ENCODE measurements at regions of chr12 and their contacts with region 1.

Region 1: GRCh38 chr12:132075714-132076553 is 68.2 kb downstream of the DDX51 start:
- DNase-seq: no peak
- ATAC-seq: no peak
- H3K4me3 ChIP-seq: no peak overlapping the region
- H3K27ac ChIP-seq: no peak overlapping the region
- H3K4me1 ChIP-seq: no peaks in the 10 kb centered on the region
- H3K27me3 ChIP-seq: no peaks in the 10 kb centered on the region
- CTCF ChIP-seq: peak; percentile 34; the same call in 1 of the 2 replicates

Region 2: GRCh38 chr12:131755305-131756113 is 320.4 kb before region 1 on chr12:
- CTCF ChIA-PET with region 1: no interaction called
- POLR2A ChIA-PET with region 1: no interaction called
- in situ Hi-C with region 1: no loop called
- intact Hi-C with region 1: no loop called
- DNase-seq: no peak
- ATAC-seq: peak; percentile 75
- H3K4me3 ChIP-seq: no peak overlapping the region
- H3K27ac ChIP-seq: no peak overlapping the region
- H3K4me1 ChIP-seq: no peaks in the 10 kb centered on the region; the same call in 1 of the 2 replicates
- H3K27me3 ChIP-seq: no peaks in the 10 kb centered on the region
- CTCF ChIP-seq: no peak; the same call in none of the 2 replicates

Region 3: DNA sequence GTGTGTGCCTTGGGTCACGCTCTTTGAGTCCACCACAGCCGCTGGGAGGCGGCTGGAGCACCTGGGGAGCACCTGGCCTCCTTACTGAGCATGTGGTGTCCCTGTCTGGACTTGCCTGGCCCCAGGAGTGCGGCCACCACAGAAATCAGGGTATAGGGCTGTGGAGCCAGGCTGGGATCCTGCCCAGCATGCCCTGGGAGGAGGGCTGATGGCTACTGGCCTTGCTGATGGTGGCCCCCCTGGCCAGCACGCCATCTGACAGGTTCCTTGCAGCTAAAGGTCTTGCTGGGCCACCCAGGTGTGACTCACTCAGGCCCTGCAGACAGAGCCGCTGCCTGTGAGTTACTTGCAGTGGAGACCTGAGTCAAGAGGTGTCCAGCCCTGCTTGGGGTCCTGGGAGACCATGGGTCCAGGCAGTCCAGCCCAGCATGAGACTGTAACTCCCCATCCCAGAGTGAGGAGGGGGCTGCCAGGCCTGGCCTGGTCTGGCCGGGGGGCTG is 175.5 kb before region 1 on chr12:
- CTCF ChIA-PET with region 1: no interaction called
- POLR2A ChIA-PET with region 1: interaction called, 13 read pairs
- in situ Hi-C with region 1: no loop called
- intact Hi-C with region 1: no loop called
- DNase-seq: no peak
- ATAC-seq: no peak
- H3K4me3 ChIP-seq: no peak overlapping the region
- H3K27ac ChIP-seq: no peak overlapping the region
- H3K4me1 ChIP-seq: no peaks in the 10 kb centered on the region; the same call in 1 of the 2 replicates
- H3K27me3 ChIP-seq: no peaks in the 10 kb centered on the region
- CTCF ChIP-seq: no peak

Region 4: DNA sequence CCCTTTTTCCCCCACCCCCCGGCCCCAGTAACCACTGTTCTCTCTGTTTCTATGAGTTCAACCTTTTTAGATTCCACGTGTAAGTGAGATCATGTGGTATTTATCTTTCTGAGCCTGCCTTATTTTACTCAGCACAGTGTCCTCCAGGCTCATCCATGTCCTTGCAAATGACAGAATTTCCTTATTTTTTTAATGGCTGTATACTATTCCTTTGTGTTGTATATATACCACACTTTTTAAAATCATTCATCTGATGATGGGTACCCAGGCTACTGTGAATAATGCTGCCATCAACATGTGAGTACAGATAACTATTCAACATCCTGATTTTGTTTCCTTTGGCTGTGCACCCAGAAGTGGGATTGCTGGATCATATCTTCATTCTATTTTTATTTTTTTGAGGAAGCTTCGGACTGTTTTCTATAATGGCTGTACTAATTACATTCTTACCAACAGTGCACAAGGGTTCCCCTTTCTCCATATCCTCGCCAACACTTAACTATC is 13.5 kb after region 1 on chr12:
- CTCF ChIA-PET with region 1: no interaction called
- POLR2A ChIA-PET with region 1: no interaction called
- in situ Hi-C with region 1: no loop called
- intact Hi-C with region 1: no loop called
- DNase-seq: no peak
- ATAC-seq: no peak
- H3K4me3 ChIP-seq: no peak overlapping the region
- H3K27ac ChIP-seq: no peak overlapping the region
- H3K4me1 ChIP-seq: peaks cover 9% of the 10 kb centered on the region
- H3K27me3 ChIP-seq: no peaks in the 10 kb centered on the region
- CTCF ChIP-seq: no peak

Region 5: DNA sequence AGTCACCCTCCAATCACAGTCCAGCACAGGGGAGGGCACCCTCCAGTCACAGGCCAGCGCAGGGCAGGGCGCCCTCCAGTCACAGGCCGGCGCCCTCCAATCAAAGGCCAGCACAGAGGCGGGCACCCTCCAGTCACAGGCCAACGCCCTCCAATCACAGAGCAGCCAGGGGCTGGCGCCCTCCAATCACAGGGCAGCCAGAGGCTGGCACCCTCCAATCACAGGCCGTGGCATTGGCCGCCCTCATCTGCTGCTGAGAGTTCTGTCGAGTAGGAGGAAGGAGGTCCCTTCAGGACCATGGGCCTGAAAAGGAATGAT is 41.6 kb after region 1 on chr12:
- CTCF ChIA-PET with region 1: interaction called, 11 read pairs
- POLR2A ChIA-PET with region 1: no interaction called
- in situ Hi-C with region 1: no loop called
- intact Hi-C with region 1: no loop called
- DNase-seq: no peak
- ATAC-seq: peak; percentile 80
- H3K4me3 ChIP-seq: no peak overlapping the region
- H3K27ac ChIP-seq: no peak overlapping the region
- H3K4me1 ChIP-seq: no peaks in the 10 kb centered on the region
- H3K27me3 ChIP-seq: no peaks in the 10 kb centered on the region
- CTCF ChIP-seq: no peak